ENCODE measurements at regions of chr3 and their contacts with region 1.

Region 1: DNA sequence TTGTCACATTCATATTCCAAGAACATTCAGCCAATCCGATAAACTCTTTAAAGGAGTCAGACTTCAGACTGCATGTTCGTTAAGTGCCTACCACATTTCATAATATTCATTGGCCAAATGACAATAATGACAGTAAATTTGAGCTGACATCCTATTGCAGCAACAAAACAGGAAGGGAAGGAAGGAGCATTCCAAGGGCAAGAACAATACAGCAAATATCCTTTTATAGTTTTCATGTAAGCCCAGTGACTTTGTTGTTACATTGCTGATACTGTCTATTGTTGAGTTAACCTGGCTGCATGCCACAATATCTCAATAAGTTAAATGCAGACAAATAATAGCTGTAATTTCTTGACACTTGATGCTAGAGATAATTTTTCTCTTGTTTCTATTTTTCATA is 16.4 kb upstream of the CBLB start:
- DNase-seq: no peak
- ATAC-seq: no peak
- H3K4me3 ChIP-seq: no peak overlapping the region
- H3K4me3 Mint-ChIP-seq: no peak overlapping the region
- H3K27ac ChIP-seq: no peak overlapping the region
- H3K27ac Mint-ChIP-seq: no peak overlapping the region
- H3K4me1 ChIP-seq: no peaks in the 10 kb centered on the region
- H3K4me1 Mint-ChIP-seq: peaks cover 11% of the 10 kb centered on the region
- H3K27me3 ChIP-seq: no peaks in the 10 kb centered on the region
- H3K27me3 Mint-ChIP-seq: no peaks in the 10 kb centered on the region
- CTCF ChIP-seq: no peak

Region 2: GRCh38 chr3:104723000-104723399 is 1162.3 kb before region 1 on chr3:
- CTCF ChIA-PET with region 1: no interaction called
- POLR2A ChIA-PET with region 1: no interaction called
- intact Hi-C with region 1: no loop called
- DNase-seq: no peak
- ATAC-seq: no peak
- H3K4me3 ChIP-seq: no peak overlapping the region
- H3K4me3 Mint-ChIP-seq: no peak overlapping the region
- H3K27ac ChIP-seq: no peak overlapping the region
- H3K27ac Mint-ChIP-seq: no peak overlapping the region
- H3K4me1 ChIP-seq: no peaks in the 10 kb centered on the region
- H3K4me1 Mint-ChIP-seq: no peaks in the 10 kb centered on the region
- H3K27me3 ChIP-seq: no peaks in the 10 kb centered on the region
- H3K27me3 Mint-ChIP-seq: no peaks in the 10 kb centered on the region
- CTCF ChIP-seq: no peak

Region 3: DNA sequence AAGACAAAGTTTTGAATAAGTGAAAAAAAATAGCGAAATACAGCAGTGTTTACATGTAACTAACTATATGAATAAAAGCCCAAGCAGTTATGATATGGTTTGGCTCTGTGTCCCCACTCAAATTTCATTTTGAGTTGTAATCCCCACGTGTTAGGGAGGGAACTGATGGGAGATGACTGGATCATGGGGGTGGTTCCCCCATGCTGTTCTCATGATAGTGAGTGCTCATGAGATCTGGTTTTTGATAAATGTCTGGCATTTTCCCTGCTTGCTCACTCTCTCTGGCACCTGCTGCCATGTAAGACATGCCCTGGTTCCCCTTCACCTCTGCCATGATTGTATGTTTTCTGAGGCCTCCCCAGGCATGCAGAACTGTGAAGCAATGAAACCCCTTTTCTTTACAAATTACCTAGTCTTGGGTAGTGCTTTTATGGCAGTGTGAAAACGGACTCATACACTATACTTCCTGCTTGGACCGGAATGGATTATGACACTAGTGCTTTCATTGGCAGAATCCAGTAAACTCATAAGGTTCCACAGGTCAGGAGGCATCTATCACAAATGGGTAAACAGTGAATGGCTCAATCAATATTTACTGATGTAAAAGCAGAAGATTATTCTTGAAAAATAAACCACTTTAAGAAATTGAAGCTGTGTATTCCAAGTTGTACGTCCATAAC is 208.5 kb before region 1 on chr3:
- CTCF ChIA-PET with region 1: no interaction called
- POLR2A ChIA-PET with region 1: no interaction called
- intact Hi-C with region 1: no loop called
- DNase-seq: no peak
- ATAC-seq: no peak
- H3K4me3 ChIP-seq: no peak overlapping the region
- H3K4me3 Mint-ChIP-seq: no peak overlapping the region
- H3K27ac ChIP-seq: no peak overlapping the region
- H3K27ac Mint-ChIP-seq: no peak overlapping the region
- H3K4me1 ChIP-seq: no peaks in the 10 kb centered on the region
- H3K4me1 Mint-ChIP-seq: peaks cover 9% of the 10 kb centered on the region
- H3K27me3 ChIP-seq: no peaks in the 10 kb centered on the region
- H3K27me3 Mint-ChIP-seq: no peaks in the 10 kb centered on the region
- CTCF ChIP-seq: no peak

Region 4: GRCh38 chr3:105899516-105899915 is 14.3 kb after region 1 on chr3:
- CTCF ChIA-PET with region 1: interaction called, 5 read pairs
- POLR2A ChIA-PET with region 1: no interaction called
- intact Hi-C with region 1: loop called in 1 of 2 experiments (anchors 1 kb)
- DNase-seq: no peak
- ATAC-seq: no peak
- H3K4me3 ChIP-seq: no peak overlapping the region
- H3K4me3 Mint-ChIP-seq: no peak overlapping the region
- H3K27ac ChIP-seq: no peak overlapping the region
- H3K27ac Mint-ChIP-seq: no peak overlapping the region
- H3K4me1 ChIP-seq: no peaks in the 10 kb centered on the region
- H3K4me1 Mint-ChIP-seq: no peaks in the 10 kb centered on the region
- H3K27me3 ChIP-seq: no peaks in the 10 kb centered on the region
- H3K27me3 Mint-ChIP-seq: no peaks in the 10 kb centered on the region
- CTCF ChIP-seq: no peak